CD8-positive, alpha-beta memory T cell (primary cell): ENCODE measurements at regions of chr12 and their contacts with region 1.

Region 1: DNA sequence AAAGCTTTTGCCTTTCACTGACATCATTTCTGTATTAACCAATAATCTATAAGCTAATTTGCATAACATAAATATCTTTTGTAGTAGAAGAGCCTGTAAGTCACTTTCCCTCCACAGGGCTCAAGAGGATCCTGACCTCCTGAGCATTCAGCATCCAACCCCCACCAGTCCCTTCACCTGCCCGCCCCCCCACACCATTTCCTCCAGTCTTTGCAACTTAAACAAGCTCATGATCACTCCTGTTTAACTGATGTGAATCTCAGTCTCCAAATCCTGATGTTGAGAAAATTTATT is 12.0 kb upstream of the CRY1 start:
- DNase-seq: no peak
- H3K4me3 ChIP-seq: no peak overlapping the region
- H3K4me3 Mint-ChIP-seq: no peak overlapping the region
- H3K27ac ChIP-seq: no peak overlapping the region
- H3K27ac Mint-ChIP-seq: no peak overlapping the region
- H3K4me1 ChIP-seq: no peaks in the 10 kb centered on the region
- H3K4me1 Mint-ChIP-seq: peaks cover 0 to 4% (median 0%) of the 10 kb centered on the region in 3 donors
- H3K27me3 ChIP-seq: no peaks in the 10 kb centered on the region
- H3K27me3 Mint-ChIP-seq: peaks cover 0 to 28% of the 10 kb centered on the region in 2 donors

Region 2: GRCh38 chr12:107014028-107014427 is 91.3 kb before region 1 on chr12:
- CTCF ChIA-PET with region 1: interaction called, 19 read pairs
- POLR2A ChIA-PET with region 1: no interaction called
- DNase-seq: peak in 4 of 5 donors; percentile 3 to 51 (median 22)
- H3K4me3 ChIP-seq: no peak overlapping the region
- H3K4me3 Mint-ChIP-seq: no peak overlapping the region
- H3K27ac ChIP-seq: no peak overlapping the region
- H3K27ac Mint-ChIP-seq: peak overlapping the region in 1 of 8 donors; percentile 73
- H3K4me1 ChIP-seq: no peaks in the 10 kb centered on the region
- H3K4me1 Mint-ChIP-seq: peaks cover 0 to 4% (median 2%) of the 10 kb centered on the region in 3 donors
- H3K27me3 ChIP-seq: no peaks in the 10 kb centered on the region
- H3K27me3 Mint-ChIP-seq: no peaks in the 10 kb centered on the region

Region 3: DNA sequence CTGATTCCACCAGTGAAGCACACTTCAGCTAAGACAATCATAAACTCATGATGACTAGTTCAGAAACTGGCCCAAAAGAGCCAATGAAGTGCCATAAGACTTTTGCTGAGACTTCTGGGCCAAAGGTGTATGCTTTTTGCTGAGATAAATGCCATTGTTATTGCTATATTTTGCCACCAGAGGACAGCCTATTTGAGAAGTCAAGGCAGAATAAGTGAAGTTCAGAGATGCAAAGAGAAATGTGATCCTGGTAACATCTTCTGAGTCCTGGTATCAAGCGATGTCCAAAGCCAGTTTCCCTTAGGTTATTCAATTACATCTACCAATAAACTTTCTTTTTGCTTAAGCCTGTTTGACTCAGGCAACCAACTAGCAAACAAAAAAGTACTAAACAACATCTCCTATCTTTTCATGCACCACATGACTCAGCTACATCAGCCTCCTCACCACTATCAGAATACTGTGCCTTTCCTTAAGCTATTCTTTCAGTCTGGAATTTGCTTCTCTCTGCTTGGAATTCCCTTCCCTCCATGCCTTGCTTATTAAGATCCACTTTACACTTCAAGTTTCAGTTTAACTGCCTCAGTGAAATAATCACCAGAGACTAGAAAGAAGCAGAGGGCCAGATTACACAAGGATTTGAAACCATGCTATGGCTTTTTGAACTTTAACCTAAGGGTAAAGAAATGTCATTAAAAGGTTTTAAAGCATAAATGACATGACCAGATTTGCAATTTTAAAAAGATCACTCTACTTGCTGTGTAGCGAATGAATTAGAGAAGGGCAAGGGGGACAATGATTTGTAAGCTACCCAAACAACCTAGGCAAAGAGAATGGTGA is 26.0 kb before region 1 on chr12:
- CTCF ChIA-PET with region 1: interaction called, 10 read pairs
- POLR2A ChIA-PET with region 1: no interaction called
- DNase-seq: peak in 2 of 5 donors; percentile 5 to 11
- H3K4me3 ChIP-seq: no peak overlapping the region
- H3K4me3 Mint-ChIP-seq: no peak overlapping the region
- H3K27ac ChIP-seq: no peak overlapping the region
- H3K27ac Mint-ChIP-seq: no peak overlapping the region
- H3K4me1 ChIP-seq: no peaks in the 10 kb centered on the region
- H3K4me1 Mint-ChIP-seq: peaks cover 18 to 38% (median 22%) of the 10 kb centered on the region in 3 donors
- H3K27me3 ChIP-seq: no peaks in the 10 kb centered on the region
- H3K27me3 Mint-ChIP-seq: peaks cover 0 to 7% of the 10 kb centered on the region in 2 donors

Region 4: GRCh38 chr12:107093417-107094182 is 11.8 kb before region 1 on chr12 and contains the start of gene CRY1:
- CTCF ChIA-PET with region 1: interaction called, 18 read pairs
- POLR2A ChIA-PET with region 1: interaction called, 3 read pairs
- DNase-seq: peak; percentile 89 to 95 (median 93)
- H3K4me3 ChIP-seq: peak within 1 kb of the TSS; percentile 68
- H3K4me3 Mint-ChIP-seq: no peak within 1 kb of the TSS
- H3K27ac ChIP-seq: peak within 1 kb of the TSS; percentile 99
- H3K27ac Mint-ChIP-seq: no peak within 1 kb of the TSS
- H3K4me1 ChIP-seq: peaks cover 22% of the 10 kb centered on the region
- H3K4me1 Mint-ChIP-seq: peaks cover 10 to 14% (median 13%) of the 10 kb centered on the region in 3 donors
- H3K27me3 ChIP-seq: no peaks in the 10 kb centered on the region
- H3K27me3 Mint-ChIP-seq: peaks cover 12 to 15% of the 10 kb centered on the region in 2 donors
- total RNA-seq, gene CRY1: 36.6 to 38.8 TPM